ENCODE measurements at regions of chr13 and their contacts with region 1.

Region 1: GRCh38 chr13:43054803-43055802 is 31.7 kb downstream of the DNAJC15 start:
- DNase-seq: peak; percentile 27 to 58
- H3K4me3 ChIP-seq: peak overlapping the region; percentile 30; the same call in 1 of the 2 replicates
- H3K27ac ChIP-seq: peak overlapping the region; percentile 77
- H3K4me1 ChIP-seq: peaks cover 55% of the 10 kb centered on the region
- H3K27me3 ChIP-seq: no peaks in the 10 kb centered on the region
- CTCF ChIP-seq: no peak

Region 2: DNA sequence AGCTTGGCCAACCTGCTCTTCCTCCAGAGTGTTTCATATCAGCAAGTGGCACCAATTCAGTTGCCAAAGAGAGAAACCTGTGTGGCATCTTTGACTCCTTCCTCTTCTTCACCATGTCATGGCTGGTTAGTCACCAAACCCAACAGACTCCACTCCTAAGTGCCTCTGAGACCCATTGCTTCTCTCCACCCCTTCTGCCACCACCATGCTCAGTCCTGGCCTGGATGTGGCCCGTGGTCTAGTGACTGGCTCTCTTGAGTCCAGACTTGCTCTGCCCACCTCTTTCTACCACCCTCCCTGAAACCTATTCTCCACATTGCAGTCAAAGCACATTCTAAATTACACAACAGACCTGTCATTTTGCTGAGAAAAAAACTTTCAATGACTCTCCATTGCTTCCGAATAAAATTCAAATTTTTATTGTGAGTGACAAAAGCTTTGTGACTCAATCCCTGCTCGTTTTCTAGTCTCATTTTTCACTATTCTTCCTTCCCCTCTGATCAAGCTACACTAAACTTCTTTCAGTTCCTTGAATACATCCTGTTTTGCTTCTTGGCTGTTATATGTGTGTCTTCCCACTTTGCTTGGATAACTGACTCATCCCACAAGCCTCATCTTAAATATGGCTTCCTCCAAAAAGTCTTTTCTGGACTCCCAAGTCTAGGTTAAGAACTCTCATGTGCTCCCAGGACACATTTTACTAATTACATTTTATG is 493.2 kb before region 1 on chr13:
- CTCF ChIA-PET with region 1: no interaction called
- POLR2A ChIA-PET with region 1: no interaction called
- intact Hi-C with region 1: no loop called
- DNase-seq: no peak
- H3K4me3 ChIP-seq: no peak overlapping the region
- H3K27ac ChIP-seq: no peak overlapping the region
- H3K4me1 ChIP-seq: no peaks in the 10 kb centered on the region
- H3K27me3 ChIP-seq: no peaks in the 10 kb centered on the region
- CTCF ChIP-seq: no peak

Region 3: GRCh38 chr13:42720113-42720857 is 334.8 kb before region 1 on chr13:
- CTCF ChIA-PET with region 1: no interaction called
- POLR2A ChIA-PET with region 1: no interaction called
- intact Hi-C with region 1: loop called (anchors 10 kb)
- DNase-seq: peak; percentile 51 to 90
- H3K4me3 ChIP-seq: peak overlapping the region; percentile 37; the same call in 1 of the 2 replicates
- H3K27ac ChIP-seq: peak overlapping the region; percentile 89
- H3K4me1 ChIP-seq: peaks cover 14% of the 10 kb centered on the region
- H3K27me3 ChIP-seq: no peaks in the 10 kb centered on the region
- CTCF ChIP-seq: no peak

Region 4: DNA sequence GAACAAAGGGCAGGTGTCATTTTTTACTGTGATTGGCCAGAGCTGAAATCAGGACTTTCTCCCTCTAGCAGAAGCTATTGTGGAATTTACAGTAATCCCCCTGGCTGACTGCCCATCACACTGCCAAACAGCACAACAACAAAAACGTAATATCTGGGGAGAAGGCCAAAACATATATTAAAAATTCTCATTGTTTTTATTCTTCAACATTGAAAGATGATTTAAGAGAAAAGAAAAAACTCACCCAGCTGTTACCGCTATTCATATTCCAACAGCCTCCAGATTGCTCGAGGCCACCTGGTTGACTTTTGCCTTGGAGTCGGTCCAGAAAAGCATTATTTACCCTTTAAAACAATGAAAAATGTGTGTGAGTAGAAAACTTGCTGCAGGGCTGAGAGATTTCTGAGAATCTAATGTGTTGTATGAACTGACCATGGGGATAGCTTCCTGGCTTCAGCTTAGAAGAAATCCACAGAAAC is 160.3 kb before region 1 on chr13:
- CTCF ChIA-PET with region 1: no interaction called
- POLR2A ChIA-PET with region 1: no interaction called
- intact Hi-C with region 1: loop called (anchors 2 kb)
- DNase-seq: peak; percentile 38 to 49
- H3K4me3 ChIP-seq: no peak overlapping the region
- H3K27ac ChIP-seq: no peak overlapping the region
- H3K4me1 ChIP-seq: peaks cover 5% of the 10 kb centered on the region; the same call in 1 of the 2 replicates
- H3K27me3 ChIP-seq: no peaks in the 10 kb centered on the region
- CTCF ChIP-seq: no peak

Region 5: DNA sequence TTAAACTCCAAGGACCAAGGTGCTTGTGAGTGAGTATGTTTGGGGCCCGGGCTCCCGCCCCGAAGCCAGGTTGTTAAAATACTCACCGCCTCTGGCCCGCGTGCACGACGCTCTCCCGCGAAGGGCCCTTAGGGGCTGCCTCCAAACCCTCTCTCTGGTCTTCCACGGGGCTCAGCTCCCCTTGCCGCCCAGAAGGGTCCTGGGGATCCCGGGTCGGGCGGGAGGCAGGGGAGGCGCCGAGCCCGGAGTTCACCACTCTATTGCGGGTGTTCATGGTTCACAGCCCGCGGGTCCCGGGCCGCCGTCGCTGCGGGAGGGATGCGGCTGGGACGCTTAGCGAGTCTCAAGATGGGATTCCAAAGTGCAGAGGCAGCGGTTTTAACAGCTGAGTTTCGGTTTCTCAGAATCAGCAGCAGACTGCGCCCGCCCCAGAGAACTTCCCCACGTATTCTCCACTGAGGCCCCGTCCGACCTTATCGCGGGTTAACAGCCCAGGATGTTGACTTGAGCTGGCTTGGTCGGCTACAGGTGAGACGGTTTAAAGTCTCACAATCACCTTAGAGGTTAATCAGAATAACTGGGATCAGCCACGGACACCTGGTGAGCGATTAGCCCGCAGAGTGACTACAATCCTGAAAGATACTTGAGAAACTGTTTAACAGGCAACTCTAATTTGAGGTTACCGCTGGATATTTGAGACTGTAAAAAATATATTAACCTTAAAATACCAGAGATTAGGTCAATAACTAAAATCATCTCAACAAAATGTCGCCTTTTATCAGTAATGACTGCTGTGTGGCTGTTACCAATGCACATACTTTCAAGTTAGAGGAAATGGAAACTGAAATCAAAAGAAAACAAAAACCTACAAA is 63.0 kb before region 1 on chr13 and contains the start of gene EPSTI1:
- CTCF ChIA-PET with region 1: no interaction called
- POLR2A ChIA-PET with region 1: no interaction called
- intact Hi-C with region 1: loop called (anchors 1 kb)
- DNase-seq: peak in 1 of 2 experiments; percentile 24
- H3K4me3 ChIP-seq: peak within 1 kb of the TSS; percentile 36; the same call in 1 of the 2 replicates
- H3K27ac ChIP-seq: no peak within 1 kb of the TSS
- H3K4me1 ChIP-seq: peaks cover 11% of the 10 kb centered on the region
- H3K27me3 ChIP-seq: no peaks in the 10 kb centered on the region
- CTCF ChIP-seq: no peak
- total RNA-seq, gene EPSTI1: 2.7 and 3.4 TPM in 2 replicates

Region 6: DNA sequence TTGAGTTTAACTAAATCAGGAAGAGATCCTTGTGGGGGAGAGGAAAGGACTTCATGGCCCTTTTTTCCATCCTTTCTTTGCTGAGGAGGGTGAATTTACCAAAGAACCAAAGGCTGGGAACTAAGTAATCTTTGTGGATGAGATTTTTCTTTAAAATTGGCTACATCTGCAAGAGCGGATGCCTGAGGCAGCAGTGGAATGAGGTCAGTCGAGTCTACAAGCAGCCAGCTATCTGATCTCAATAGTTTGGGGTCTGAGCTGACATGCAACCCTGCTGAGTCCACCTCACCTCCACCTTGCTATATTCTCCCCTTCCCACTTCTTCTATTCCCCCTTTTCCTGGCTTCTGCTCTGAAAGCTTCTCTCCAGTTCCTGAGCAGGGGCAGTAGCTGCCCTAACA is 35.3 kb before region 1 on chr13:
- CTCF ChIA-PET with region 1: no interaction called
- POLR2A ChIA-PET with region 1: no interaction called
- intact Hi-C with region 1: no loop called
- DNase-seq: no peak
- H3K4me3 ChIP-seq: no peak overlapping the region
- H3K27ac ChIP-seq: no peak overlapping the region
- H3K4me1 ChIP-seq: 0 out of 2 replicates have a peak, but pooled peaks cover 4% of the 10 kb centered on the region
- H3K27me3 ChIP-seq: no peaks in the 10 kb centered on the region
- CTCF ChIP-seq: no peak

Region 7: GRCh38 chr13:43132257-43132656 is 77.2 kb after region 1 on chr13:
- CTCF ChIA-PET with region 1: interaction called, 10 read pairs
- POLR2A ChIA-PET with region 1: no interaction called
- intact Hi-C with region 1: no loop called
- DNase-seq: peak; percentile 27 to 56
- H3K4me3 ChIP-seq: no peak overlapping the region
- H3K27ac ChIP-seq: no peak overlapping the region
- H3K4me1 ChIP-seq: peaks cover 7% of the 10 kb centered on the region; the same call in 1 of the 2 replicates
- H3K27me3 ChIP-seq: no peaks in the 10 kb centered on the region
- CTCF ChIP-seq: no peak; the same call in 1 of the 2 replicates

Measured in PC-9 (cell line).